Endothelial cell of umbilical vein (primary cell): ENCODE measurements at regions of chr4 and their contacts with region 1.

Region 1: GRCh38 chr4:175017751-175018150 is 99.6 kb downstream of the ADAM29 start:
- DNase-seq: no peak
- H3K4me3 ChIP-seq: no peak overlapping the region
- H3K27ac ChIP-seq: no peak overlapping the region
- H3K4me1 ChIP-seq: no peaks in the 10 kb centered on the region
- H3K27me3 ChIP-seq: no peaks in the 10 kb centered on the region
- CTCF ChIP-seq: no peak
- POLR2A ChIP-seq: no peak

Region 2: DNA sequence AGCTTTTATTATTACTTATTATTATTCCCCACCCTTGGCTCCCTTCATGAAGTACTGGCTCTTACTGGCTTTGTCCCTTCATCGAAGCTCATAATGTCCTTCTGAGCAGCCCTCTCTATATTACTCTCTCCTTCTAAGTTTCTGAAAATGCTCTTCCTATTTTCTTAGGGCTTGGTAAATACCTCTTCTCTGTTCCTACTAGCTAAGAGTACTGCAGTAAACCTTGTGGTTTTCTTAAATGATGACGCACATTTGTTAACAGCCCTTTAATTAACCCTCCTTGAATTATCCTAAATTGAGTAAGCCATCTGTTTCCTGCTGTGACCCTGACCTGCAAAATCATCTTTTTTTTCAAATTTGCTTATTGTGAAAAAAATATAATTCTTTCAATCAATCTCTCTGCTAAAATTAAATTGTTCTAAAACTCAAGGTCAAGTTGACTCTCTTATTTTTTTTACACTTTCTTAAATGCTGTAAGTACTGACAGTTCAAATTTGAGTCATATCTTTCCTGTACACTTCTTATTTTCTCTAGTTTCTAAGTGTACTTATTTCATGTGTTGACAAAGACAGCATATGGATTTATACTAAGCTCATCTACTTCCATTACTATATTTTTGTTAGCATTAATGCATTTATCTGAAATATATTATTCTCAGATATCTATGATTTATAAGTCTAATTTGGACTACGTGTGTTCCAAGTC is 49.3 kb after region 1 on chr4:
- CTCF ChIA-PET with region 1: no interaction called
- POLR2A ChIA-PET with region 1: no interaction called
- dilution Hi-C with region 1: no loop called
- intact Hi-C with region 1: no loop called
- DNase-seq: no peak
- H3K4me3 ChIP-seq: no peak overlapping the region
- H3K27ac ChIP-seq: no peak overlapping the region
- H3K4me1 ChIP-seq: no peaks in the 10 kb centered on the region
- H3K27me3 ChIP-seq: no peaks in the 10 kb centered on the region
- CTCF ChIP-seq: no peak
- POLR2A ChIP-seq: no peak

Region 3: GRCh38 chr4:175998777-175999176 is 981.0 kb after region 1 on chr4:
- CTCF ChIA-PET with region 1: no interaction called
- POLR2A ChIA-PET with region 1: no interaction called
- dilution Hi-C with region 1: no loop called
- intact Hi-C with region 1: loop called (anchors 10 kb)
- DNase-seq: no peak
- H3K4me3 ChIP-seq: no peak overlapping the region
- H3K27ac ChIP-seq: no peak overlapping the region
- H3K4me1 ChIP-seq: no peaks in the 10 kb centered on the region
- H3K27me3 ChIP-seq: peaks cover 2 to 7% of the 10 kb centered on the region in 2 experiments
- CTCF ChIP-seq: no peak
- POLR2A ChIP-seq: no peak